Activated B cell treated with CpG ODN at 0.5 μM for 24 hours (primary cell): ENCODE measurements at regions of chr16 and their contacts with region 1.

Region 1: GRCh38 chr16:3797904-3798811 is 80.8 kb upstream of the TRAP1 start:
- DNase-seq: no peak
- ATAC-seq: no peak
- H3K4me3 Mint-ChIP-seq: peak overlapping the region; percentile 49
- H3K27ac Mint-ChIP-seq: peak overlapping the region; percentile 77
- H3K4me1 Mint-ChIP-seq: peaks cover 65% of the 10 kb centered on the region
- H3K27me3 Mint-ChIP-seq: no peaks in the 10 kb centered on the region
- CTCF ChIP-seq: no peak

Region 2: DNA sequence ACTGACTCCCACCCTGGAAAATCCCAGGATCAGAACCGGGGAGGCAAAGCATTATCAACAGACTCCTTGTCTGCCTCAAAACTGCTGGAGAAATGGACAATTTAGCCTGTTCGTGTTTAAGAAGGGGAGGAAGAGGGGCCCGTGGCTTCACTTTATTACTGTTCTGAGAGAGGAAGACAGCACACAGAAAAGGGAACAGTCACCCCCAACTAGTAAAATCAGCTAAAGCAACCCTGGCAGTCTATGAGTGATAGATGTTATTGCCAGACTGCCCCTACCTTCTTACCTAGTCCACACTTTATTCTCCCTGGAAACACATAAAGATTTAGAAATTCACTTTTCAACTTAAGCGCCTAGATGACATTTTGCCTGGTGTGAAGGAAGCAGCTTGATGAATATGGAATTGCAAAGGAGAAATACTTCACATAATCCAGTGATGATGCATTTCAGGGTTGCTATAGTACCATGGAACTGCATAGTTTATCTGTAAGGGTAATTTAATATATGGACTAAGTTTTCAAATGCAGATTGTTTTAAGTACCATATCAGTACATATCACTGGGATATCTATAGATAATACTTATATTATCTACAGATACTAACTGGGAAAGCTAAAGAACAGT is 44.0 kb before region 1 on chr16:
- CTCF ChIA-PET with region 1: no interaction called
- POLR2A ChIA-PET with region 1: no interaction called
- intact Hi-C with region 1: no loop called
- DNase-seq: no peak
- ATAC-seq: no peak
- H3K4me3 Mint-ChIP-seq: no peak overlapping the region
- H3K27ac Mint-ChIP-seq: no peak overlapping the region
- H3K4me1 Mint-ChIP-seq: no peaks in the 10 kb centered on the region
- H3K27me3 Mint-ChIP-seq: no peaks in the 10 kb centered on the region
- CTCF ChIP-seq: no peak

Region 3: DNA sequence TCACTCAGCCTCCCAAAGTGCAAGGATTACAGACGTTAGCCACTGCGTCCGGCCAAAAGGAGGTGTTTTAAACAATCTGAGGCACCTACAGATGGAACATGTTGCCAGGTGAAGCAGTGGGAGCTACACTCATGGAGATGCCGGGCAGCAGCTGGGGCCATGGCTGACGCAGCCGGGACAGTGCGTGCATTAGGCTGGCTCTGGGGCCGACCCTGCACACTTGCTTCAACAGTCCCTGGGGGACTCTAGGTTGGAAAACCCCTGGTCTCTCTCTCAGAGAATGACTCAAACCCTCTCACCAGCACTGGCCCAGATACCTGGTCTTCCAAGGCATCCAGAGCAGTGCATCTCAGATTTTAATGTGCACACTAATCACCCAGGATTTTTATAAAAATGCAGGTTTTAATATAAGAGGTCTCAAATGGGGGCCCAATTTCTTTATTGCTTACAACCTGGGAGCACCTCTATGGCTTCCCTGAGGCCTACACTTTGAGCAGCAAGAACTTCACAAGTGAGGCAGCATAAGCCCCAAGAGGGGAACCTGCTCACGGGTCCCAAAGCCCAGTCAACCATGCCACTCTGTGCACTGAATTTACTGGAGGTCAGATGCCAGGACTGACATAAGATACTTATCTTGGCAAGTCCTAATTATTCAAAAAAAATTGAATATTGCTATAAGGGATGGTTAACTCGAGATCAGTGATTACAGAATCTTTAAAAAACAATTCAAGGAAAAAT is 10.1 kb before region 1 on chr16:
- CTCF ChIA-PET with region 1: no interaction called
- POLR2A ChIA-PET with region 1: no interaction called
- intact Hi-C with region 1: loop called (anchors 1 kb)
- DNase-seq: peak; percentile 36
- ATAC-seq: peak; percentile 97
- H3K4me3 Mint-ChIP-seq: peak overlapping the region; percentile 41
- H3K27ac Mint-ChIP-seq: peak overlapping the region; percentile 71
- H3K4me1 Mint-ChIP-seq: peaks cover 41% of the 10 kb centered on the region
- H3K27me3 Mint-ChIP-seq: no peaks in the 10 kb centered on the region
- CTCF ChIP-seq: no peak

Region 4: GRCh38 chr16:3829631-3830536 is 31.7 kb after region 1 on chr16:
- CTCF ChIA-PET with region 1: no interaction called
- POLR2A ChIA-PET with region 1: no interaction called
- intact Hi-C with region 1: loop called (anchors 5 kb)
- DNase-seq: no peak
- ATAC-seq: no peak
- H3K4me3 Mint-ChIP-seq: no peak overlapping the region
- H3K27ac Mint-ChIP-seq: no peak overlapping the region
- H3K4me1 Mint-ChIP-seq: peaks cover 56% of the 10 kb centered on the region
- H3K27me3 Mint-ChIP-seq: no peaks in the 10 kb centered on the region
- CTCF ChIP-seq: no peak